Aorta (tissue), 5 donors: ENCODE measurements at regions of chr17 and their contacts with region 1.

Region 1: GRCh38 chr17:4891411-4892342 is 7.7 kb upstream of the C17orf107 start:
- DNase-seq: no peak
- ATAC-seq: no peak
- H3K4me3 ChIP-seq: no peak overlapping the region
- H3K27ac ChIP-seq: no peak overlapping the region
- H3K4me1 ChIP-seq: no peaks in the 10 kb centered on the region
- H3K27me3 ChIP-seq: no peaks in the 10 kb centered on the region

Region 2: GRCh38 chr17:4733073-4733531 is 158.6 kb before region 1 on chr17:
- intact Hi-C with region 1: loop called (anchors 5 to 10 kb)
- DNase-seq: peak in 1 of 2 donors; percentile 76
- ATAC-seq: no peak
- H3K4me3 ChIP-seq: no peak overlapping the region
- H3K27ac ChIP-seq: no peak overlapping the region
- H3K4me1 ChIP-seq: no peaks in the 10 kb centered on the region
- H3K27me3 ChIP-seq: no peaks in the 10 kb centered on the region

Region 3: GRCh38 chr17:4806777-4807604 is 84.7 kb before region 1 on chr17 and contains the start of gene PLD2:
- intact Hi-C with region 1: loop called in 1 of 2 experiments (anchors 5 kb)
- DNase-seq: peak; percentile 93 to 94
- ATAC-seq: peak; percentile 96
- H3K4me3 ChIP-seq: peak within 1 kb of the TSS; percentile 92 to 93
- H3K27ac ChIP-seq: no peak within 1 kb of the TSS
- H3K4me1 ChIP-seq: no peaks in the 10 kb centered on the region
- H3K27me3 ChIP-seq: no peaks in the 10 kb centered on the region
- total RNA-seq, gene PLD2: 25.3 to 65.0 TPM

Region 4: DNA sequence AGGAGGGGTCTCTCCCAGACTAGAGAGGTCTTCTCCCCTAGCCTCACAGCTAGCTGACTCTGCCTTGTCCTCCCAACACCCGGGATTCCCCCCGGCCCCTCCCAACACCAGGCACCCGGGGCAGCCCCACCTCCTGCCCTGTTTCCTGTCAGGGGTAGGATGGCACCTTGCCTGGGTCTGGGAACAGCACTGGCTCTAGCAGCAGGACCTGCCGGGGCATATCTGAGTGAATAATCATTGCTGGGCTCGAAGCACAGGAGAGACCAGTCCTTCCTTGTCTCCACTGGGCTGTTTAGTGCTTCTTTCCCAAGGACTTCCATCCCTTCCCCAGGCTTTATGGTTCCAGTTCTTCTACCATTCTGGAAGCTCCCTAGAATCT is 32.8 kb before region 1 on chr17:
- intact Hi-C with region 1: no loop called
- DNase-seq: peak in 1 of 2 donors; percentile 71
- ATAC-seq: no peak
- H3K4me3 ChIP-seq: no peak overlapping the region
- H3K27ac ChIP-seq: no peak overlapping the region
- H3K4me1 ChIP-seq: no peaks in the 10 kb centered on the region
- H3K27me3 ChIP-seq: no peaks in the 10 kb centered on the region